Activated naive CD4-positive, alpha-beta T cell treated with anti-CD3 and anti-CD28 coated beads for 36 hours (primary cell): ENCODE measurements at regions of chr6 and their contacts with region 1.

Region 1: DNA sequence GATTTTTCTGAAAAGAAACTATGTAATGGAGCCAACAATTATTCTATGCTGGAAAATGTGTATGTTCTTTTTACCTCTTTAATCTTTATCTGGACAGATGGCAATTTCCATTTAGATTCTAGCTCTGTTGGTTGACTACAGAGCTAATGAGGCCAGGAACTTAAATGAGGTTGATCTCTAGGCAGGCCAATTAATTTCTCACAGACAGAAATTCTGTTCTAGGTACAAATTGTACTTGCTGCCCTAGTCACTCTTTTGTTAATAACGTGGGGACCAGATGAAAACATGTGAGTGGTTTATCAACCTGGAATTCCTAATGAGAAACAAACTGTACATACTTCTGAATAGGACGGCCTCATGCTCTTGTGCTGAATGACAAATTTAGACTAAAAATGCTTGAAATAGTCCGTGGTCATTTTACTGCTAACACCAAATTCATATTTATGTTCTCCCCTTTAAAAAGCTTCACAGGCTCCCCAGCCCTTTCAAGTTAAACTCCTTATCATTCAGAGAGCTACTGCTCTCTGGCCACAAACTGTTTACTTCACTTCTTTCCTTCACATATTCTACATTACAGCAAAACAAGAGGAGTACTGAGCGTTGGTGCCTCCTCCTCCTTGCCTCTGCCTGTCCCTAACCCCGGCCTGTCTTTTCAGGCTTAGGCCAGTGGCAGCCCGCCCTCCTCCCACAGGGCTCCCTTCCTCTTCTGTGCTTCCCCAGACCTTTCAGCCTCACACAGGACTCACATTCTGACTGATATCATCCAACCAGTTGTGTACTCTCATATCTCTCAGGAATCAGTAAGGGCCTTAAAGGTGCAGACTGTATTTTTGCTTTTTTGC is 41.4 kb downstream of the DTNBP1 start:
- DNase-seq: no peak
- H3K4me3 Mint-ChIP-seq: no peak overlapping the region
- H3K27ac Mint-ChIP-seq: no peak overlapping the region
- H3K4me1 Mint-ChIP-seq: peaks cover 24% of the 10 kb centered on the region
- H3K27me3 Mint-ChIP-seq: no peaks in the 10 kb centered on the region

Region 2: DNA sequence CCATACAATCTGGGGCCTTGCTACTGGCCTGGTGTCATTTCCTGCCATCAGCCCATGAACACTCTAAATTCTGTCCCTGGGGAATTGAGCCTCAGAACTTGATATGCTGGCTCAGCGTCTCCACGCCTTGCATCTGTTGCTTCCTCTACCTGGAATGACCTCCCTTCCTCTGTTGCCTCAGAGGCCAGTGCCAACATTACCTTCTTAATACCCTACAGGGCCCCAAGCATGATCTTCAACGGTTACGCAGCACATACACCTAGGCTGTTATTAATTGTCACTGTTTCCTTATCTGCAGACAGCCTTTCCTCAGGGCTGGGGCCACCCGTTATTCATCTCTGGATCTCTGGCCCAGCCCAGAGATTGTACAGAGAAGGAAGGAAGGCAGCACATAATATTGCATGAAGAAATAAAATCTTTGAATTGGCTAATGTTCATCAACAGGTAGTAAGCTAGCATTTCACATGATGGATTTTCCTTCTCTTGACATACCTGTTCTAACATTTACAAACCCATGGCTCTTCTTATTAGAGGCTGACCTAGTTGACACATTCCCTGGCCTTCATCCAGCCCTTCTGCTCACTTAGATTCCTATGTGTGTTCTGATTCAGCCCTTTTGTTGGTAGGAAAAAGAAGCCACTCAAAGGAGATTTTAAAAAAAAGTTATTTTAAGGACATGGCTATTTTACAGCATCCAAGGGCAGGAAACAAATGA is 1705.0 kb before region 1 on chr6:
- CTCF ChIA-PET with region 1: no interaction called
- intact Hi-C with region 1: loop called (anchors 10 kb)
- DNase-seq: no peak
- H3K4me3 Mint-ChIP-seq: no peak overlapping the region
- H3K27ac Mint-ChIP-seq: no peak overlapping the region
- H3K4me1 Mint-ChIP-seq: no peaks in the 10 kb centered on the region
- H3K27me3 Mint-ChIP-seq: peaks cover 14% of the 10 kb centered on the region

Region 3: DNA sequence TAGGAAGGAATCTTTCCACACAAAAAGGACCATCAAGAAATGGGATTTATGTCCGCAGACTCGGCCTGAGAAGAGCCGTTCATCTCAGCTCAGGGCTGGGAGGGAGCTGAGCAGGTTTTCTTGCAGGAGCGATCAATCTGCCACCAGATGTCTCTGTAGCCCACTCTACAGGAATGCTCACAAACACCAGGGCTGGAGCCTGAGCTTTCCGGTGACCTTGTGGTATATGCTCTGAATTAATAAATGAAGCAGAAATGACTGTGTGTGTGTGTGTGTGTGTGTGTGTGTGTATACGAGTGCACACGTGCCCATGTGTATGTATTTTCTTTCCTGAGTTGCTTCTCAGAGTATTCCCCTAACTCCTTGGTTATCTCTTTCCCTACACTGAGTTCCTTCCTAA is 1491.8 kb before region 1 on chr6:
- CTCF ChIA-PET with region 1: no interaction called
- intact Hi-C with region 1: loop called (anchors 5 kb)
- DNase-seq: peak; percentile 57
- H3K4me3 Mint-ChIP-seq: no peak overlapping the region
- H3K27ac Mint-ChIP-seq: no peak overlapping the region
- H3K4me1 Mint-ChIP-seq: peaks cover 23% of the 10 kb centered on the region
- H3K27me3 Mint-ChIP-seq: no peaks in the 10 kb centered on the region

Region 4: DNA sequence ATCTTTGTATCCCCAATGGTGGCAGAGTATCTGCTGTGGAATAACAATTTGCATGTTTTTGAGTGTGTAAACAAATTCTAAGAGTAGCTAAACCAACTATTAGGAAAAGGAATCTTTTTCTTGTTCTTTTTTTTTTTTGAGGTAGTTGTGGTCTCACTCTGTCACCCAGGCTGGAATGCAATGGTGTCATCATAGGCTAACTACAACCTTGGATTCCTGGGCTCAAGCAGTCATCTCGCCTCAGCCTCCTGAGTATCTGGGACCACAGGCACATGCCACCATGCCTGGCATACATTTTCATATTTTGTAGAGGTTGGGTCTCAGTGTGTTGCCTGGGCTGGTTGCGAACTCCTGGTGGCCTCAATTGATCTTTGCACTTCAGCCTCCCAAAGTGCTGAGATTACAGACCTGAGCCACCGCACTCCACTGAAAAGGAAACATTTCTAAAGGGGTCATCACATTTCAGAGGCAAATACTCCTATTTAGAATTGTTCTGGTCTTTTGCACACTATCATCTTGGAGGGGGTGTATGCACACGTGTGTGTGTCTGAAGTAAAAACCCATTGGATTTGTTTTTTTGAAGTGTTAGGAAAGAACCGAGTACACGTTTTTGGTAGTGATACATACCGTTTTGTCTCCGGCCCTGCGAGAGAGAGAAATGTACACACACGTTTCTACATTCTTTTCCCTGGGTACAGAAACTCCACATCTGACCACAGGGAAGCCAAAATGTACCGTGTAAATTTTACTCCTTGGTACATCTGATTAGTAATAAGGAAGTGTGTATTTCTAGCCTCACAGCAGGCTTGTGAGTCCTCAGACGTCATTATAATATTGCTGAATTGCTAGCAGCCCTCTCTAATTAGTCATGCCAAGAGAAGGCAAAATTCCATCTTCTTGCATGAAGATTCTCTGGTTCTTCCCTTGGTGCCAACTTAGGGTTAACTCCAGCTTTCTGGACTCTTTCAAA is 192.0 kb before region 1 on chr6:
- CTCF ChIA-PET with region 1: no interaction called
- intact Hi-C with region 1: loop called (anchors 10 kb)
- DNase-seq: no peak
- H3K4me3 Mint-ChIP-seq: no peak overlapping the region
- H3K27ac Mint-ChIP-seq: no peak overlapping the region
- H3K4me1 Mint-ChIP-seq: peaks cover 76% of the 10 kb centered on the region
- H3K27me3 Mint-ChIP-seq: no peaks in the 10 kb centered on the region

Region 5: DNA sequence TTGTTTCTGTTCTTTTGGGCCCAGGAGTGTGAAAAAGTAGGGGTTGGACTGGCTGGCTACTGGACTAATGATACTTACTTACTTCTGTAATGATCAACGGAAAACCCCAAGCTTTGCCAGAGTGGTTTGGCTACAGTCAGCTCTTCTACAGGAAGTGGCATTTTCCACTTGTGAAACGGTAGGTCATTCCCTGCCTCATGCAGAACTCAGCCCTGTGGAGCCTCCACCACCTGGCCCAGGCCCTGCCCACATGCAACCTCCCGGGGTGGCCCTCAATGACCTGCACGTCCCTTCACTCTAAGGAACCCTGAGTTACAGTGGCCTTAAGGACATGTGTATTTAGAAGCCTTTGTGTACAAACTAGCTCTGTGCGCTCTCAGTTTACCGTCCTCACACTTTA is 99.0 kb before region 1 on chr6:
- CTCF ChIA-PET with region 1: interaction called, 3 read pairs
- intact Hi-C with region 1: loop called (anchors 10 kb)
- DNase-seq: no peak
- H3K4me3 Mint-ChIP-seq: no peak overlapping the region
- H3K27ac Mint-ChIP-seq: no peak overlapping the region
- H3K4me1 Mint-ChIP-seq: peaks cover 7% of the 10 kb centered on the region
- H3K27me3 Mint-ChIP-seq: no peaks in the 10 kb centered on the region